Activated CD4-positive, alpha-beta T cell treated with anti-CD3 and anti-CD28 coated beads for 36 hours (primary cell): ENCODE measurements at regions of chr16 and their contacts with region 1.

Region 1: DNA sequence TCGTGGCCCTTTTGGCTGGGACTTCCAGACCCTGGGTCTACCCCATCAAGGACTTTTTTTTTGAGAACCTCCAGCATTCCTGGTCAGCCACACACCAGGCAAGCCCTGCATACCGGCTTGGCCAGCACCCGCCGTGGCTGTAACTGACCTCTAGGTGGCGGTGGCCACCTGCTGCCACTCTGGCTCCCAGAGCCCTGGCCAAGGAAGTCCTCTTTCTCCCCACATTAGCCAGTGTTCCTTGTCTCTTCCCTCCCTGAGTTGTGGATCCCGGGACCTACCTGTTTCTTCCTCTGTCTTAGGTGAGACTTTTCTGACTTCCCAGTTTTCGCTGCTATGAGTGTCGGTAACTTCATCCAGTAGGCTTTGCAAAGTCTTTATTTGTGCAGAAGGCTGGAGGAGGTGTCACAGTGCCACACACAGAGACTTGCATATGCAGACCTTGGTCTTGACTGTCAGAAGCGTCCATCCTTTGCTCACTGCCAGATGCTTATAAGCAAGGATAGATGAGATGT is 348.3 kb downstream of the CPPED1 start:
- DNase-seq: peak; percentile 74
- ATAC-seq: peak; percentile 71
- H3K4me3 Mint-ChIP-seq: no peak overlapping the region
- H3K27ac Mint-ChIP-seq: no peak overlapping the region
- H3K4me1 Mint-ChIP-seq: peaks cover 29% of the 10 kb centered on the region
- H3K27me3 Mint-ChIP-seq: no peaks in the 10 kb centered on the region

Region 2: GRCh38 chr16:12573730-12574383 is 118.5 kb after region 1 on chr16:
- CTCF ChIA-PET with region 1: interaction called, 4 read pairs
- POLR2A ChIA-PET with region 1: no interaction called
- intact Hi-C with region 1: loop called (anchors 1 to 5 kb)
- DNase-seq: peak; percentile 89
- ATAC-seq: peak; percentile 91
- H3K4me3 Mint-ChIP-seq: no peak overlapping the region
- H3K27ac Mint-ChIP-seq: peak overlapping the region; percentile 31
- H3K4me1 Mint-ChIP-seq: peaks cover 12% of the 10 kb centered on the region
- H3K27me3 Mint-ChIP-seq: no peaks in the 10 kb centered on the region

Region 3: DNA sequence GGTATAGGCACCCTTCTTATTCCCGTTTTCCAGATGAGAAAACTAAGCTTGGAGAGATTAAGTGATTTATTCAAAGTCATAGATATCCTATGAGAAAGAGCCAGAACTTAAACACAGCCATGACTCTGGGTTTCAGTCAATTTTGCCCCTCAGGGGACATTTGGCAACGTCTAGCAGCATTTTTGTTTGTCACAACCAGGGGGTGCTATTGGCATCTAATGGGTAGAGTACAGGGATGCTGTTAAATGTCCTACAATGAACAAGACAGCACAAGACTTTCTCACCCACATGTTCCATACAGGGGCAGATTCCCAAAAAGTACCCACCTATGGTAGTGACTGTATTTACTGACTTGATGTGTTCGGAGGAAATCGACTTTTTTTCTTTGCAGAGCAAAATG is 441.2 kb after region 1 on chr16:
- CTCF ChIA-PET with region 1: no interaction called
- POLR2A ChIA-PET with region 1: no interaction called
- intact Hi-C with region 1: loop called in 1 of 2 experiments (anchors 10 kb)
- DNase-seq: peak; percentile 9
- ATAC-seq: no peak
- H3K4me3 Mint-ChIP-seq: no peak overlapping the region
- H3K27ac Mint-ChIP-seq: no peak overlapping the region
- H3K4me1 Mint-ChIP-seq: no peaks in the 10 kb centered on the region
- H3K27me3 Mint-ChIP-seq: peaks cover 40% of the 10 kb centered on the region

Region 4: DNA sequence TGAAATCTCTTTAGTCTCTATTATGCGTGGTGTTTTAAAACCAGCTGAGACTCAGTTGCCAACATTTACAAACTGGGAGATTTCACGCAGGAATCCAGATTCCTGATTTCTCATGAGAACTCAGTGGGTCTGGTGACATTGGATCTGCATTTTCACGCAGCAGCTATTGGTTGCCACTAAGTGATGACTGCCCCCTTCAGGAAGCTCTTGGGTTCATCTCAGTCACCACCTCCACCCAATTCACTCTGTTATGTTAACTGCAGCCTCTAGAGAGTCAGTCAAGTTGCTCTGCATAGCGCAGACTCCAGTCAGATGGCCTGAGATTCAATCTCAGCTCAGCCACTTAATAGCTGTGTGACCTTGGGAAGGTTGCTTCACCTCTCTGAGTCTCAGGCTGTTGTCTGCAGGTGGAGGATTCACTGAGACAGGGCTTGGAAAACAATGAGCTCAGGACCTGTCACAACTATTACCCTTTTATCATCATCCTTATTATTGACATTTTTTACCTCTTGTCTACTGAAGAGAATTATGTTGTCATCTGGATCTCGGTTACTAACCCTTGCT is 452.4 kb after region 1 on chr16:
- CTCF ChIA-PET with region 1: interaction called, 3 read pairs
- POLR2A ChIA-PET with region 1: no interaction called
- intact Hi-C with region 1: loop called in 1 of 2 experiments (anchors 2 kb)
- DNase-seq: peak; percentile 24
- ATAC-seq: no peak
- H3K4me3 Mint-ChIP-seq: no peak overlapping the region
- H3K27ac Mint-ChIP-seq: no peak overlapping the region
- H3K4me1 Mint-ChIP-seq: peaks cover 1% of the 10 kb centered on the region
- H3K27me3 Mint-ChIP-seq: peaks cover 49% of the 10 kb centered on the region

Region 5: DNA sequence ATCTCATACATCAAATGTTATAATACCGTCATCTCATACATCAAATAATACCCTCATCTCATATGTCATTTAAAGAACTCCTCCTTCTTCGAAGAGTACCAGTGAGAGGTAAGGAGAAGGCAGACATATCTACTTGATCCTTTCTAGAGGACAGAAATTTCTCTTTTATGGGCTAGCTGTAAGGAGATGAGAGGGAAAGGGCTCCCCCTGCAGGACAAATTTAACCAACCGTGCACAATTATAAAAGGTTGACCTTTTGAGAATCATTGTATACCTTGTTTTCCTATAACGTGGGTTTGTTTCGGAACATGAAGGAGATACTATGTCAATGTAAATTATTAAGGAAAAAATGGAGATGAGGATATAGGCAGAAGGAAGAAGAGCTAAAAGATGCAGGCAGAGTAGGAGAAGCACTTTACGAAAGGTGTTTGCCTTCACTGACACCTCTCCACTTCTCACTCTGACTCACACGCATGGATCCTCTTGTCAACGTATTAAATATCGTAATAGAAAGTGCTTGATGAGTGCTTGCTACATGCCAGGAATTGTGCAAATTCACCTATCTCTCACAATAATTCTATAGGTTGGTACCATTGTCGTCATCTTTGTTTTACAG is 998.7 kb after region 1 on chr16:
- CTCF ChIA-PET with region 1: no interaction called
- POLR2A ChIA-PET with region 1: no interaction called
- intact Hi-C with region 1: loop called in 1 of 2 experiments (anchors 5 kb)
- DNase-seq: peak; percentile 56
- ATAC-seq: no peak
- H3K4me3 Mint-ChIP-seq: no peak overlapping the region
- H3K27ac Mint-ChIP-seq: no peak overlapping the region
- H3K4me1 Mint-ChIP-seq: no peaks in the 10 kb centered on the region
- H3K27me3 Mint-ChIP-seq: peaks cover 15% of the 10 kb centered on the region